Prostate gland (tissue), 2 donors: ENCODE measurements at regions of chrX and their contacts with region 1.

Region 1: GRCh38 chrX:37846934-37847732 is at the start of gene DYNLT3:
- DNase-seq: peak; percentile 67
- H3K4me3 ChIP-seq: peak within 1 kb of the TSS; percentile 59 to 64
- H3K27ac ChIP-seq: peak within 1 kb of the TSS; percentile 79 to 88
- H3K4me1 ChIP-seq: no peaks in the 10 kb centered on the region
- H3K27me3 ChIP-seq: no peaks in the 10 kb centered on the region
- CTCF ChIP-seq: no peak
- POLR2A ChIP-seq: peak; percentile 80
- total RNA-seq, gene DYNLT3: 15.2 to 25.7 TPM

Region 2: DNA sequence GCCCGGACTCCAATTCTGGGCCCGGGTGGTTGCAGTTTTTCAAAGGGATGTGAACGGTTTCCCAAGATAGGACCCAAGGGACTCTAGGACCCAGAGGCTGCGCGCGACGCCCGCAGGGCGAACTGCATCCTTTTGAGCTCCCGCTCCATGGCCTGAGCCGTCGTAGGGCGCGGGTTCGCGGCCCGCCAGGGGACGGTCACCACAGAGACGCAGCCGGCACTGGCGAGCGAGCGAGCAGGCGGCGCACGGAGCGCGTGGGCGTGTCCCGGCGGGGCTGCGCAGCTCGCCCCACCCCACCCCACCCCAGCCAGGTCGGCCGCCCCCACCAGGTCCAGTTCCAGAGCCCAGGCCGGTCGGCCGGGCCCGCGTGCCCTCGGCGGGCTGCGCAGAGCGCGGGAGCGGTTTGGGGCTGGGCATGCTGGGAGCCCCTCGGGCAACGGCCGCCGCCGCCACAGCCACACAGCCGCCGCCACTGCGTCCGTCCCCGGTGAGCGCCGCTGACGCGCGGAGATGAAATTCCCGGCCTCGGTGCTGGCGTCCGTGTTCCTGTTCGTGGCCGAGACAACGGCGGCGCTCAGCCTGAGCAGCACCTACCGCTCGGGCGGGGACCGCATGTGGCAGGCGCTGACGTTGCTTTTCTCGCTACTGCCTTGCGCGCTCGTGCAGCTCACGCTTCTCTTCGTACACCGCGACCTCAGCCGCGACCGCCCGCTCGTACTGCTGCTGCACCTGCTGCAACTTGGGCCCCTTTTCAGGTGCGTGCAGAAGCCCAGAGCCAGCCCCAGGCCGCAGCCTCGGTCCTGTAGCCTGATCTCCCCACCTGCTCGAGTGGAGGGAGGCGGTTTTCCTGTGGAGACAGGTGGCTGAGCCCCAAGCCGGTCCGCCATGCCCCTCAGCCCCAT is 161.4 kb before region 1 on chrX and contains the start of gene XK:
- intact Hi-C with region 1: loop called (anchors 5 kb)
- DNase-seq: peak; percentile 16
- H3K4me3 ChIP-seq: peak within 1 kb of the TSS; percentile 37 to 44
- H3K27ac ChIP-seq: peak within 1 kb of the TSS; percentile 47 to 72
- H3K4me1 ChIP-seq: no peaks in the 10 kb centered on the region
- H3K27me3 ChIP-seq: no peaks in the 10 kb centered on the region
- CTCF ChIP-seq: no peak
- POLR2A ChIP-seq: peak; percentile 13
- total RNA-seq, gene XK: 2.6 to 3.2 TPM